Common myeloid progenitor, CD34-positive (primary cell): ENCODE measurements at regions of chr2 and their contacts with region 1.

Region 1: DNA sequence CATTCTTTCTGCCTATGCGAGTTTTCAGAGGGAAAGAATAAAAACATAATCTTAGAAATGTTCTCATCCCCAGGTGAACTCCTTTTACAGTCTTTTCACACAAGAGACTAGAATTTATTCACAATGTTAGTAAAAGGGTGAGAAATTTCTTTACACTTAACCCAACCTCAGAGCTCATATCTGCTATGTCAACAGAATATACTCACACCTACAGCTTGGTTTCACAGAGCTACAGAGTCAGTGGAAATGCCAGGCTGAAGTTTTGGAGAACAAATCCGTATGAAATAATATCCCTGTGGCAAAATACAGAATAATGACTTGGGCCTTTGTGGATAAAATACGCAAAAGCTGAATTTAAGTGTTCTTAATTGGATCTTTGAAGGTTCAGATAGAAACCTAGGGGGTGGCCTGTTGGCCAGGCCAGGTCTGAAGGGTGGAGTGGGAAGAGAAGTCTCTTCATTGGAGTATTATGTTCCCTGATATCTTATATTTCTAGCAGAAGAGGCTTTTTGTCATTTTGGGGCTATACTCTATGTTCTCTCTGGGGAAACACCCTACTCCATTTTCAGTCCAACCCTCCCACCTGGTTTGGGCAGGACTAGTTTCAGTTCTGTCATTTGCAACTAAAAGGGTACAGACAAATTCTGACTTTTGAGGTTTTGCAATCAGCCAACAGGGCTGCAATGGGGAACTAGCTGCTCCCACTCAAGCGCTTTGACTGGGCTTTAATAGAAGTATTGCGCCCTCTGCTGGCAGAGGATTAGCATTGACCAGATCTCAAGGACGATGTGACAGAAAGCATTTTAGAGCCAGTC is 25.7 kb downstream of the FBXO48 start:
- DNase-seq: peak; percentile 95 to 98 (median 98)
- H3K4me3 ChIP-seq: no peak overlapping the region
- H3K27ac ChIP-seq: peak overlapping the region; percentile 0 to 62
- H3K4me1 ChIP-seq: peaks cover 10 to 26% (median 20%) of the 10 kb centered on the region in 4 experiments
- H3K27me3 ChIP-seq: no peaks in the 10 kb centered on the region

Region 2: GRCh38 chr2:68272246-68272994 is 169.0 kb before region 1 on chr2:
- CTCF ChIA-PET with region 1: no interaction called
- POLR2A ChIA-PET with region 1: no interaction called
- DNase-seq: peak; percentile 79 to 96 (median 92)
- H3K4me3 ChIP-seq: peak overlapping the region in 2 of 7 experiments; percentile 37 to 46
- H3K27ac ChIP-seq: peak overlapping the region; percentile 82 to 95
- H3K4me1 ChIP-seq: peaks cover 10 to 23% (median 13%) of the 10 kb centered on the region in 4 experiments
- H3K27me3 ChIP-seq: no peaks in the 10 kb centered on the region

Region 3: DNA sequence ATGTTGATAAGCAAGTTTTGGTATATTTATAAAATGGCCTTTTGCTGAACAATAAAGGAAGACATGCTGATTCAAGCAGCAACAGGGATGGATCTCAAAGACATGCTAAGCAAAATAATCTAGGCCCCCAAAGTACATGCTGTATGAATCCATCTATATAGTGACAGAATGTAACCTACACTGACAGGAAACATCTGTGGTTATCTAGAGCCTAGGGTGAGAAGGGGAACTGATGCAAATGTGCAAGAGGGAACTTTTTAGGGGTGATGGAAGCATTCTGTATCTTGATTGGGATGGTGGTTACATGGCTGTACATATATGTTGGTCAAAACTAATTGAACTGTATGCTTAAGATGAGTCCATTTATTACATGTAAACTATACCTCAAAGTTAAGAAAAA is 145.9 kb before region 1 on chr2:
- CTCF ChIA-PET with region 1: interaction called, 10 read pairs
- POLR2A ChIA-PET with region 1: no interaction called
- DNase-seq: peak; percentile 63 to 92 (median 86)
- H3K4me3 ChIP-seq: no peak overlapping the region
- H3K27ac ChIP-seq: no peak overlapping the region
- H3K4me1 ChIP-seq: peaks cover 9 to 30% (median 24%) of the 10 kb centered on the region in 4 experiments
- H3K27me3 ChIP-seq: no peaks in the 10 kb centered on the region

Region 4: GRCh38 chr2:68352651-68353391 is 88.6 kb before region 1 on chr2:
- CTCF ChIA-PET with region 1: interaction called, 12 read pairs
- POLR2A ChIA-PET with region 1: no interaction called
- DNase-seq: peak in 2 of 3 donors; percentile 52 to 69
- H3K4me3 ChIP-seq: peak overlapping the region in 1 of 7 experiments; percentile 33
- H3K27ac ChIP-seq: peak overlapping the region; percentile 54 to 69
- H3K4me1 ChIP-seq: peaks cover 0 to 10% (median under 1%) of the 10 kb centered on the region in 4 experiments
- H3K27me3 ChIP-seq: no peaks in the 10 kb centered on the region

Region 5: GRCh38 chr2:68403199-68403644 is 38.2 kb before region 1 on chr2:
- CTCF ChIA-PET with region 1: interaction called, 19 read pairs
- POLR2A ChIA-PET with region 1: no interaction called
- DNase-seq: peak in 2 of 3 donors; percentile 62 to 80
- H3K4me3 ChIP-seq: no peak overlapping the region
- H3K27ac ChIP-seq: peak overlapping the region in 1 of 2 experiments; percentile 34
- H3K4me1 ChIP-seq: peaks cover 0 to 4% (median 0%) of the 10 kb centered on the region in 4 experiments
- H3K27me3 ChIP-seq: no peaks in the 10 kb centered on the region

Region 6: GRCh38 chr2:68426848-68427579 is 14.4 kb before region 1 on chr2:
- CTCF ChIA-PET with region 1: interaction called, 52 read pairs
- POLR2A ChIA-PET with region 1: no interaction called
- DNase-seq: peak in 2 of 3 donors; percentile 63 to 75
- H3K4me3 ChIP-seq: no peak overlapping the region
- H3K27ac ChIP-seq: no peak overlapping the region
- H3K4me1 ChIP-seq: peaks cover 12 to 26% (median 22%) of the 10 kb centered on the region in 4 experiments
- H3K27me3 ChIP-seq: no peaks in the 10 kb centered on the region

Region 7: GRCh38 chr2:68491582-68491981 is 50.2 kb after region 1 on chr2:
- CTCF ChIA-PET with region 1: no interaction called
- POLR2A ChIA-PET with region 1: no interaction called
- DNase-seq: no peak
- H3K4me3 ChIP-seq: no peak overlapping the region
- H3K27ac ChIP-seq: no peak overlapping the region
- H3K4me1 ChIP-seq: peaks cover 0 to 3% (median 2%) of the 10 kb centered on the region in 4 experiments
- H3K27me3 ChIP-seq: no peaks in the 10 kb centered on the region